Esophagus muscularis mucosa (tissue), 4 donors: ENCODE measurements at regions of chr11 and their contacts with region 1.

Region 1: GRCh38 chr11:62048065-62048464 is 75.7 kb upstream of the INCENP start:
- DNase-seq: no peak
- H3K4me3 ChIP-seq: no peak overlapping the region
- H3K27ac ChIP-seq: no peak overlapping the region
- H3K4me1 ChIP-seq: no peaks in the 10 kb centered on the region
- H3K27me3 ChIP-seq: no peaks in the 10 kb centered on the region
- CTCF ChIP-seq: no peak
- EP300 ChIP-seq: no peak
- POLR2A ChIP-seq: no peak

Region 2: DNA sequence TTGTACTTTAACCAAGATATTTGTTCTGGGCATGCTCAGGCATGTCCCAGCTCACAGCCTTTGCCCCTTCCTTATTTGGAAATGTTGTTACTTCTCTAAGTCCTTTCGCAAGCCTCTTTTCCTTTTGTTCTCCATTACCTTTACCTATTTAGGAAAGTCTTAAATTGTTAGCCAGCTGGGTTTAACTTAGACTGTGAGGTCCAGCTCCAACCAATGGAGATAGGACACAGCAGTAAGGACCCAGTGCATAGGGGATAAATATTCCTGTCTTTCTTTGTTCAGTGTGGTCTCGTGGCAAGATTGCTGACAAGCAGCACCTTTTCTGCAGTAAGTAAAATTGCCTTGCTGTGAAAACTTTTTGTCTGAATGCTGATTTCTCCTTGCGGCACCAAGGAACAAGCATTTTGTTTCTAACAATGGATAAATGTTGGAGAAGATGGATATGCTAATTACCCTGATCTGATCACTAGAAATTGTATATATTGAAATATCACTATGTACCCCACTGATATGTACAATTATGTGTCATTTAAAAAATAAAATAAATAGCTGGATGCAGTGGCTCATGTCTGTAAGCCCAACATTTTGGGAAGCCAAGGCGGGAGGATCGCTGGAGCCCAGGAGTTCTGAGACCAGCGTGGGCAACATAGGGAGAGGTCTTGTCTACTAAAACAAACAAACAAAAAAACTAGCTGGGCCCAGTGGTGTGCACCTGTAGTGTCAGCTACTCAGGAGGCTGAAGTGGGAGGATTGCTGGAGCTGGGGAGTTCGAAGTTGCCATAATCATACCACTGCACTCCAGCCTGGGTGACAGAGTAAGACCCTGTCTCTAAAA is 48.7 kb before region 1 on chr11:
- intact Hi-C with region 1: loop called (anchors 10 kb)
- DNase-seq: no peak
- H3K4me3 ChIP-seq: no peak overlapping the region
- H3K27ac ChIP-seq: no peak overlapping the region
- H3K4me1 ChIP-seq: peaks cover 0 to 7% (median 2%) of the 10 kb centered on the region in 4 donors
- H3K27me3 ChIP-seq: no peaks in the 10 kb centered on the region
- CTCF ChIP-seq: no peak
- EP300 ChIP-seq: no peak
- POLR2A ChIP-seq: no peak

Region 3: GRCh38 chr11:62012832-62013461 is 35.1 kb before region 1 on chr11:
- intact Hi-C with region 1: no loop called
- DNase-seq: no peak
- H3K4me3 ChIP-seq: no peak overlapping the region
- H3K27ac ChIP-seq: no peak overlapping the region
- H3K4me1 ChIP-seq: no peaks in the 10 kb centered on the region
- H3K27me3 ChIP-seq: no peaks in the 10 kb centered on the region
- CTCF ChIP-seq: no peak
- EP300 ChIP-seq: no peak
- POLR2A ChIP-seq: no peak